Activated naive CD4-positive, alpha-beta T cell treated with anti-CD3 and anti-CD28 coated beads, Interleukin-2, amount 10 ng/mL, durations not matched to agents 7 days and 5 days (primary cell): ENCODE measurements at regions of chr1 and their contacts with region 1.

Region 1: GRCh38 chr1:245045087-245045881 is 109.5 kb upstream of the KIF26B start:
- DNase-seq: no peak
- H3K4me3 Mint-ChIP-seq: no peak overlapping the region
- H3K27ac Mint-ChIP-seq: no peak overlapping the region
- H3K4me1 Mint-ChIP-seq: peaks cover 3% of the 10 kb centered on the region
- H3K27me3 Mint-ChIP-seq: peaks cover 14% of the 10 kb centered on the region

Region 2: GRCh38 chr1:244599937-244600350 is 445.3 kb before region 1 on chr1:
- CTCF ChIA-PET with region 1: interaction called, 36 read pairs
- DNase-seq: peak; percentile 50
- H3K4me3 Mint-ChIP-seq: no peak overlapping the region
- H3K27ac Mint-ChIP-seq: peak overlapping the region; percentile 47
- H3K4me1 Mint-ChIP-seq: peaks cover 6% of the 10 kb centered on the region
- H3K27me3 Mint-ChIP-seq: peaks cover 5% of the 10 kb centered on the region

Region 3: DNA sequence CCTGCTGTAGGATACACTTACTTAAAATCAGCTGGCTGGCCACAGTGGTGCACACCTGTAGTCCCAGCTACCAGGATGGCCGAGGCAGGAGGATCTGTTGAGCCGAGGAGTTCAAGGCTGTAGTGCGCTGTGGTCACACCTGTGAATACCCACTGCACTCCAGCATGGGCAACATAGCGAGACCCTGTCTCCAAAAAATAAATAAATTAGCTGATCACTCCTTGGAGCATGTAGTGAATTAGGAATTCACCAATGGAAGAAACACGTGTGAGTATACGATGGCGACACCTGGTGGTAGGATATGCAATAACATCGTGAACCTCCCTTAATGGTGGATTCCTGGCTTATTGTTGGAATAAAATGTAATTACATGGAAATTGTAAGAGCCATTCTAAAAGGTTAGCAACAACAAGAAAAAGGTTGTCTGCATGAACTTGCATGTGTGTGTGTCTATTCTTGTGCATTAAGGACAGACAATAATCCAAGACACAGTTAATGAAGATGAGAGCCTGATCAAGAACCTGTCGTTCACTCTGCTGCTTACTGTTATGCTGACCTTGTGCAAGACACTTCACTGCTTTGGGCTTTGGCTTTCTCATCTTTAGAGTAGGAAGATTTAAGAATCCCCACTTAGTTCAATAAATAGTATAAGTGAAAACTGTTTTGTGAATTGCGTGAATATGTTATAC is 248.4 kb before region 1 on chr1:
- CTCF ChIA-PET with region 1: interaction called, 120 read pairs
- DNase-seq: peak; percentile 69
- H3K4me3 Mint-ChIP-seq: no peak overlapping the region
- H3K27ac Mint-ChIP-seq: no peak overlapping the region
- H3K4me1 Mint-ChIP-seq: peaks cover 5% of the 10 kb centered on the region
- H3K27me3 Mint-ChIP-seq: peaks cover 4% of the 10 kb centered on the region

Region 4: GRCh38 chr1:245031041-245031440 is 14.2 kb before region 1 on chr1:
- CTCF ChIA-PET with region 1: interaction called, 20 read pairs
- DNase-seq: no peak
- H3K4me3 Mint-ChIP-seq: no peak overlapping the region
- H3K27ac Mint-ChIP-seq: no peak overlapping the region
- H3K4me1 Mint-ChIP-seq: peaks cover 9% of the 10 kb centered on the region
- H3K27me3 Mint-ChIP-seq: peaks cover 14% of the 10 kb centered on the region